ENCODE measurements at regions of chr6 and their contacts with region 1.

Region 1: GRCh38 chr6:36759148-36759759 is 61.6 kb downstream of the RAB44 start:
- DNase-seq: peak; percentile 85
- ATAC-seq: peak; percentile 75
- H3K4me3 Mint-ChIP-seq: no peak overlapping the region
- H3K27ac Mint-ChIP-seq: no peak overlapping the region
- H3K4me1 Mint-ChIP-seq: peaks cover 44% of the 10 kb centered on the region
- H3K27me3 Mint-ChIP-seq: peaks cover 2% of the 10 kb centered on the region

Region 2: GRCh38 chr6:36594029-36594815 is 165.0 kb before region 1 on chr6 and contains the start of gene SRSF3:
- CTCF ChIA-PET with region 1: interaction called, 13 read pairs
- POLR2A ChIA-PET with region 1: interaction called, 3 read pairs
- DNase-seq: peak; percentile 98
- ATAC-seq: peak; percentile 88
- H3K4me3 Mint-ChIP-seq: peak within 1 kb of the TSS; percentile 90
- H3K27ac Mint-ChIP-seq: peak within 1 kb of the TSS; percentile 98
- H3K4me1 Mint-ChIP-seq: peaks cover 31% of the 10 kb centered on the region
- H3K27me3 Mint-ChIP-seq: no peaks in the 10 kb centered on the region
- total RNA-seq, gene SRSF3: 482 to 509 TPM

Region 3: DNA sequence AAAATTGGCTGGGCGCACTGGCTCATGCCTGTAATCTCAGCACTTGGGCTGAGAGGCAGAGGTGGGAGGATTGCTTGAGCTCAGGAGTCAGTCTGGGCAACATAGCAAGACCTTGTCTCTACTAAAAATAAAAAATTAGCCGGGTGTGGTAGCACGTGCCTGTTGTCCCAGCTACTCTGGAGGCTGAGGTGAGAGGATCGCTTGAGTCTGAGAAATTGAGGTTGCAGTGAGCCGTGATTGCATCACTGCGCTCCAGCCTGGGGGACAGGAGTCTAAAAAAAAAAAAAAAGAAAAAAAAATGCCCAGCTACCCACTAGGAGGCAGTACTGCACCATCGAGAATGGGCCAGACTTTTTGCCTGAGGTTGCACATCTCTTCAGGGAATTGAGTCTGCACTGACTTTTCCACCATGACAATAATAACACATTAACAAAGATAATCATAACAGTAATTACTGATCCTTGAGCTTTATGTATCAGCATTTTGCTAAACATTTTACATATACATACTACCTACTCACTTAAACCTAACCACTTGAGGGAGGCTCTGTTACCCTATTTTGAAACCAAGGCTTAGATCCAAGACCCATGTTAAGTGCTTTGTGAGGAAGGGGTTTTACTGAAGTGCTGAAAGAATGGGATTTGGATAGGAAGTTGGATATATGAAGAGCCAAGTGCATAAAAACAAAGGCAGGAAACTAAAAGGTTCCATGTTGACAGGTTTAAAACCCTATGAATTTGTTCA is 144.1 kb before region 1 on chr6:
- CTCF ChIA-PET with region 1: interaction called, 128 read pairs
- POLR2A ChIA-PET with region 1: interaction called, 3 read pairs
- DNase-seq: peak; percentile 57
- ATAC-seq: peak; percentile 38
- H3K4me3 Mint-ChIP-seq: no peak overlapping the region
- H3K27ac Mint-ChIP-seq: no peak overlapping the region
- H3K4me1 Mint-ChIP-seq: peaks cover 8% of the 10 kb centered on the region
- H3K27me3 Mint-ChIP-seq: no peaks in the 10 kb centered on the region

Region 4: GRCh38 chr6:36678518-36679027 is 80.7 kb before region 1 on chr6 and contains the start of gene CDKN1A:
- CTCF ChIA-PET with region 1: interaction called, 20 read pairs
- POLR2A ChIA-PET with region 1: interaction called, 3 read pairs
- DNase-seq: peak; percentile 84
- ATAC-seq: peak; percentile 72
- H3K4me3 Mint-ChIP-seq: peak within 1 kb of the TSS; percentile 89
- H3K27ac Mint-ChIP-seq: peak within 1 kb of the TSS; percentile 90
- H3K4me1 Mint-ChIP-seq: peaks cover 65% of the 10 kb centered on the region
- H3K27me3 Mint-ChIP-seq: no peaks in the 10 kb centered on the region
- total RNA-seq, gene CDKN1A: 43.4 to 44.2 TPM

Region 5: GRCh38 chr6:36851149-36851614 is 91.9 kb after region 1 on chr6:
- CTCF ChIA-PET with region 1: interaction called, 16 read pairs
- POLR2A ChIA-PET with region 1: no interaction called
- DNase-seq: peak; percentile 68
- ATAC-seq: no peak
- H3K4me3 Mint-ChIP-seq: no peak overlapping the region
- H3K27ac Mint-ChIP-seq: no peak overlapping the region
- H3K4me1 Mint-ChIP-seq: peaks cover 5% of the 10 kb centered on the region
- H3K27me3 Mint-ChIP-seq: no peaks in the 10 kb centered on the region

Measured in activated CD8-positive, alpha-beta T cell treated with anti-CD3 and anti-CD28 coated beads, Interleukin-2, amount 10 ng/mL, durations not matched to agents 7 days and 5 days (primary cell).